ENCODE measurements at regions of chr2 and their contacts with region 1.

Region 1: DNA sequence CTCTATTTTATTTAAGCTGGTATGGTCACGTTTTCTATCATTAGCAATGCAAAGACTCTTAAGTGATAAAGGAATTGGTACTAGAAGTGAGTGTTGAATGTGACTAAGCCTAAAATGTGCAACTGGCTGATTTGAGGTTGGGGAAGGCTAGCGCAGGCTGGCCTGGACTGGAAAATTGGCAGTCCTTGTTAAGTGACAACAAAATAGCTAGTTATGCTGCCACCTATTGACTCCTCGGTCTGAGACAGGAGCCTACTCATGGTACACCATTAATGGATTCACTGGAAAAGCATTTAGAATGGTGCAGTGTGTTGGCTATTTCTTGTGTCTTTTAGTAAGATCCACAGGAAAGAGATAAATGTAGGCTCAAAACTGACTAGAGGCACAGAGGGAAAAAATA is 5.7 kb upstream of the WIPF1 start:
- DNase-seq: peak; percentile 58
- H3K4me3 Mint-ChIP-seq: no peak overlapping the region
- H3K27ac Mint-ChIP-seq: no peak overlapping the region
- H3K4me1 Mint-ChIP-seq: peaks cover 25% of the 10 kb centered on the region
- H3K27me3 Mint-ChIP-seq: no peaks in the 10 kb centered on the region
- CTCF ChIP-seq: peak; percentile 18

Region 2: DNA sequence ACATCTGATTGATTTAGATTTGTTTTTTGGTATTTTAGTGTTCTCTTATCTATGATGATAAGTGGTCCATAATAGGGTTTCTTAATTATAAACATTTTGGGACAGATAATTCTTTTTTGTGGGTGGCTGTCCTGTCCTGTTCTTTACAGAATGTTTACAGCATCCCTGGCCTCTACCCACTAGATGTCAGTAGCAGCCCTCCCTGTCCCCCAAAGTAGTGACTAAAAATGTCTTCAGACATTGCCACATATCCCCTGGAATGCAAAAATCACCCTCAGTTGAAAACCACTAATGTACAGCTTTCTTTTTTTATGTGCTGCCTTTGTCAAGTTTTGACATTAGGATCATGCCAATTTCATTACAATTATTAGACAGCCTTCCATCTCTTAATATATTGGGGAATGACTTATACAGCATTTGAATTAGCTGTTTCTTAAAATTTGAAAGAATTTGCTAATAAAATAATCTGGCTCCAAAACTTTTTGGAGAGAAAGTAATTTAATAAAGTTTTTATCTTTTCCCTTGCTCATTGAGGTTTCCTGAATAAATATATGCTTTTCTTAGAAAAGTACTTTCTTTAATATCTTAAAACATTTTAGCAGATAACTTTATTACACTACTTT is 25.2 kb before region 1 on chr2:
- CTCF ChIA-PET with region 1: interaction called, 5 read pairs
- POLR2A ChIA-PET with region 1: no interaction called
- intact Hi-C with region 1: loop called (anchors 1 kb)
- DNase-seq: peak; percentile 67
- H3K4me3 Mint-ChIP-seq: no peak overlapping the region
- H3K27ac Mint-ChIP-seq: no peak overlapping the region
- H3K4me1 Mint-ChIP-seq: peaks cover 8% of the 10 kb centered on the region
- H3K27me3 Mint-ChIP-seq: no peaks in the 10 kb centered on the region
- CTCF ChIP-seq: peak; percentile 56

Measured in MCF 10A (cell line).